Left colon (tissue), 2 donors: ENCODE measurements at regions of chr1 and their contacts with region 1.

Region 1: GRCh38 chr1:171984850-171985485 is 143.7 kb downstream of the DNM3 start:
- DNase-seq: no peak
- ATAC-seq: peak; percentile 79

Region 2: DNA sequence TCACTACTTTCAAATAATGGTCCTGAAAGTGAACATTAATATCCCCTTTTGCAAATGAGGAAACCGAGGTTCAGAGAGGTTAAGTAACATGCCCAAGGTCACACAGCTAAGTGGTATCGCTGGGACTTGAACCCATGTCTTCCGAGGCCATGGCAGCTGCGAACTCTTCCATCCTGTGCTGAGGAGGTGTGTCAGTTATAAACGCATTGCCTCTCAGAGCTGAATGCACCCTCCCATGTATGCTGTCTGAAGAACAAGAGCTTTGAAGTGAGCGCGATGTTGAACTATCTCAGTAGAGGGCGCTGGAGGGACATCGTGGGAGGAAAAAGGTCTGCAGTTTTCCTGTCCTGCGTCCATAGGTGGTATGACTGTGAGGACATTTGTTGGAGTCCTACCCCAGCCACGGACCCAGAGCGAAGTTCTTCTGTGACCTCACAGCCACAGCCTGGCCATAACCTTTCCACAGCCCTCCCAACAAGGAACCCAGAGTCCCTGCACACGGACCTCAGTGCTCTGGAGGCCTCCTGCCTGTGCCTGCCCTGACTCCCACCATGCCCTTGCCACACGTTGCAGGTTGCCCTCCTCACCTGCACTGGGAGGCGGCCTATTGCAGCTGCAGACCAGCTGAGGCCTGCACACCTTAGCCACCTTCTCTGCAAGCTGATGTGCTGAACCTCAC is 340.0 kb before region 1 on chr1:
- intact Hi-C with region 1: loop called in 1 of 2 experiments (anchors 10 kb)
- DNase-seq: peak; percentile 69 to 78
- ATAC-seq: peak; percentile 93

Region 3: DNA sequence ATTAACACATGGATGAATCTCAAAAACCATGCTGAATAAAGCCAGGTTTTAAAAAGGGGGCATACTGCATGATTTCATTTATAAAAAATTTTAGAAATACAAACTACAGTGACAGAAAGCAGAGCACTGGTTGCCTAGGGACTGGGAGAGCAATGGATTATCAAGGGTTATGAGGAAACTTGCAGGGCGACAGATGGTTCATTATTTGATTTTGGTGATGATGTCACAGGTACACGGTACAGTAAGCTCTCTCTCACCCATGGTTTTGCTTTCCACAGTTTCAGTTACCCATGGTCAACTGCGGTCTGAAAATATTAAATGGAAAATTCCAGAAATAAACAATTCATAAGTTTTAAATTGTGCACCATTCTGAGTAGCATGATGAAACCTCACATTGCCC is 257.2 kb before region 1 on chr1:
- intact Hi-C with region 1: no loop called
- DNase-seq: no peak
- ATAC-seq: peak; percentile 44

Region 4: GRCh38 chr1:171801487-171801891 is 183.5 kb before region 1 on chr1:
- intact Hi-C with region 1: loop called (anchors 2 to 10 kb)
- DNase-seq: no peak
- ATAC-seq: peak; percentile 67